ENCODE measurements at regions of chr9 and their contacts with region 1.

Region 1: GRCh38 chr9:33816327-33817252 is at the start of gene UBE2R2:
- DNase-seq: peak; percentile 95
- H3K4me3 ChIP-seq: peak within 1 kb of the TSS; percentile 96 to 97 (median 96)
- H3K27ac ChIP-seq: peak within 1 kb of the TSS; percentile 96 to 99 (median 98)
- H3K4me1 ChIP-seq: peaks cover 0 to 60% (median 54%) of the 10 kb centered on the region in 4 donors
- H3K27me3 ChIP-seq: no peaks in the 10 kb centered on the region
- CTCF ChIP-seq: no peak
- EP300 ChIP-seq: no peak
- POLR2A ChIP-seq: peak; percentile 57 to 76
- total RNA-seq, gene UBE2R2: 24.4 to 32.4 (median 25.7) TPM

Region 2: GRCh38 chr9:33619666-33620404 is 196.8 kb before region 1 on chr9:
- intact Hi-C with region 1: no loop called
- DNase-seq: no peak
- H3K4me3 ChIP-seq: no peak overlapping the region
- H3K27ac ChIP-seq: peak overlapping the region in 2 of 4 donors; percentile 67 to 78
- H3K4me1 ChIP-seq: peaks cover 0 to 17% (median 8%) of the 10 kb centered on the region in 4 donors
- H3K27me3 ChIP-seq: no peaks in the 10 kb centered on the region
- CTCF ChIP-seq: no peak
- EP300 ChIP-seq: no peak
- POLR2A ChIP-seq: no peak

Region 3: DNA sequence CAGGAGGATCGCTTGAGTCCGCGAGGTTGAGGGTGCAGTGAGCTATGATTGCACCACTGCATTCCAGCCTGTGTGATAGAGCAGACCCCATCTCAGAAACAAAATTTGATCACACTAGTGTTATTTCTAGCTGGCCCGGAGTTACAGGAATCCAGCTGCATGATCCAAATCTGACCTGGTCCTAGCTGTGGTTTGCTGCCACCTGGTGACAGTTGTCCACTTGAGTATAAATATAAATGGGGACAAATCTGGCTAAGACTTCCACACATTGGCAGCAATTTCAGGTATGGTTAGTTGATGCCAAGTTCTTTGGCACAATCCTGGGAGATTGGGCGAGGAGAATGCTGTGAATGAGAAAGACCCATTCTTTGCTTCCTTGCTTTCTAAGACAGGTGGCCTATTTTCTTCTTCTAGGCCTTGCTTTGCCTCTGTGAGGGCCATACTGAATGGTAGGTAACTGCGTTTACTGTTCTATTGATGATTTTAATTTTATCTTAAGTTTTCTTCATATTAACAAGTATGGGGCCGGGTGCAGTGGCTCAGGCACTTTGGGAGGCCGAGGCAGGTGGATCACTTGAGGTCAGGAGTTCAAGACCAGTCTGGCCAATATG is 35.7 kb after region 1 on chr9:
- intact Hi-C with region 1: loop called (anchors 2 kb)
- DNase-seq: peak; percentile 73
- H3K4me3 ChIP-seq: no peak overlapping the region
- H3K27ac ChIP-seq: peak overlapping the region in 1 of 4 donors; percentile 27
- H3K4me1 ChIP-seq: peaks cover 0 to 67% (median 53%) of the 10 kb centered on the region in 4 donors
- H3K27me3 ChIP-seq: no peaks in the 10 kb centered on the region
- CTCF ChIP-seq: peak in 3 of 4 experiments; percentile 54 to 63 (median 57)
- EP300 ChIP-seq: no peak
- POLR2A ChIP-seq: no peak

Region 4: GRCh38 chr9:34048923-34049697 is 232.5 kb after region 1 on chr9:
- intact Hi-C with region 1: loop called (anchors 10 kb)
- DNase-seq: peak; percentile 99
- H3K4me3 ChIP-seq: peak overlapping the region; percentile 58 to 99 (median 84)
- H3K27ac ChIP-seq: peak overlapping the region; percentile 84 to 95 (median 92)
- H3K4me1 ChIP-seq: peaks cover 0 to 28% (median 17%) of the 10 kb centered on the region in 4 donors
- H3K27me3 ChIP-seq: no peaks in the 10 kb centered on the region
- CTCF ChIP-seq: no peak
- EP300 ChIP-seq: peak in 1 of 4 donors; percentile 39
- POLR2A ChIP-seq: no peak

Region 5: GRCh38 chr9:34072868-34073590 is 256.4 kb after region 1 on chr9:
- intact Hi-C with region 1: loop called (anchors 5 kb)
- DNase-seq: peak; percentile 69
- H3K4me3 ChIP-seq: no peak overlapping the region
- H3K27ac ChIP-seq: peak overlapping the region; percentile 67 to 77 (median 72)
- H3K4me1 ChIP-seq: peaks cover 0 to 24% (median 22%) of the 10 kb centered on the region in 4 donors
- H3K27me3 ChIP-seq: no peaks in the 10 kb centered on the region
- CTCF ChIP-seq: no peak
- EP300 ChIP-seq: no peak
- POLR2A ChIP-seq: no peak

Region 6: DNA sequence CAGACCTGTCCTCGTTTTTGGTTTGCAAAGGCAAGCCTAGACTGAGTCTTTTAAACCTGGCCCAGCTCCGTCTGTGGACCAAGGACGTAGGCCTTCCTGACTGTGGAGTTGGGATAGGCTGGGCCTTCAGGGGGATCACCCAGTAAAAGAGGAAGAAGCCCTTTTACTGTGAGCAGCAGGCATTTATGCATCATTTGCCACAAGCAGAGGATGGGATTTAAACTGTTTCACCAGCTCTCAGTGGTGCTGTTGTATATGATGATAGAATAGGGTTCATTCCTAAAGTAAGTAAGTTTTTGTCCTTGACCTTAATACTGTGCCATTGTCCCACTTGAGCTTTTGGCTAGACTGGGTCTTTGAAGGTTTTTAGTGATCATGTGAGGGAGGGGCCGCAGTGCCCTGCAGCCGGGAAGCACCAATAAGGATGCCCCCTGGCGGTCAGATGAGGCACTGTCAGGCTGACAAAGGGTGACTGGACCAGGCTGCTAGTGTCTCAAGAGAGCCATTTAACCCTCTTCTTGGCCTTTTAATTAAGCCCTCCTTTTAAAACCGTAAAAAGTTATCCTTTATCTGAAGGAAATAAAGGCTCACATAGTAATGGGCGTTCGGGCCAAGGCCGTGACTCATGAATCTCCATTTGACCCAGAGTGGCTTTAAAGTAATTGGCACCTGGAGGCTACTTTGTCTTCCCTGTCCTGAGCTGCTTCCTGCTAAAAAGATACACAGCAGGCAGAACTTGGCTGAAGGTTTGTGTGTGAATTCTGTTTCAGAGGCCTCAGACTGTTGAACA is 436.3 kb after region 1 on chr9:
- intact Hi-C with region 1: loop called (anchors 10 kb)
- DNase-seq: peak; percentile 80
- H3K4me3 ChIP-seq: no peak overlapping the region
- H3K27ac ChIP-seq: peak overlapping the region; percentile 63 to 84 (median 78)
- H3K4me1 ChIP-seq: peaks cover 0 to 54% (median 45%) of the 10 kb centered on the region in 4 donors
- H3K27me3 ChIP-seq: no peaks in the 10 kb centered on the region
- CTCF ChIP-seq: peak; percentile 23 to 97 (median 92)
- EP300 ChIP-seq: no peak
- POLR2A ChIP-seq: no peak

Region 7: DNA sequence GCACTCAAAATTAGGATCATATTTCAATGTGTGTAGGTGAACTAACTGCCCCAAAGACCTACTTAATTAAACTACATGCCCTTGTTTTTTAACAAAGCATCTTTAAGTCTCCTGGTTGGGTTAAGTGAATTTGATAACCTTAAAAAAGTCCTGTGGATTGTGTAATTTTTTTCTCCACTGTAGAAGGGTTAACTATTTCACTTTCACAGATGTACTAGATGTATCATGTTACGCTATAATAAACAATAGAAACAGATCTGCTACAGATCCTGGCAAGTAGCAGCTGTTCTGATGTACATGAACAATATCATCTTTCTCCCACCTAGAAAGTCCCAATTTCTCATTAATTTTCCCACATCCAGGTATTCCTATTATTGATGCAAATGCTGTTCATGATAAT is 493.6 kb after region 1 on chr9:
- intact Hi-C with region 1: no loop called
- DNase-seq: no peak
- H3K4me3 ChIP-seq: no peak overlapping the region
- H3K27ac ChIP-seq: no peak overlapping the region
- H3K4me1 ChIP-seq: no peaks in the 10 kb centered on the region
- H3K27me3 ChIP-seq: no peaks in the 10 kb centered on the region
- CTCF ChIP-seq: no peak
- EP300 ChIP-seq: no peak
- POLR2A ChIP-seq: no peak